A673 (cell line): ENCODE measurements at regions of chr4 and their contacts with region 1.

Region 1: DNA sequence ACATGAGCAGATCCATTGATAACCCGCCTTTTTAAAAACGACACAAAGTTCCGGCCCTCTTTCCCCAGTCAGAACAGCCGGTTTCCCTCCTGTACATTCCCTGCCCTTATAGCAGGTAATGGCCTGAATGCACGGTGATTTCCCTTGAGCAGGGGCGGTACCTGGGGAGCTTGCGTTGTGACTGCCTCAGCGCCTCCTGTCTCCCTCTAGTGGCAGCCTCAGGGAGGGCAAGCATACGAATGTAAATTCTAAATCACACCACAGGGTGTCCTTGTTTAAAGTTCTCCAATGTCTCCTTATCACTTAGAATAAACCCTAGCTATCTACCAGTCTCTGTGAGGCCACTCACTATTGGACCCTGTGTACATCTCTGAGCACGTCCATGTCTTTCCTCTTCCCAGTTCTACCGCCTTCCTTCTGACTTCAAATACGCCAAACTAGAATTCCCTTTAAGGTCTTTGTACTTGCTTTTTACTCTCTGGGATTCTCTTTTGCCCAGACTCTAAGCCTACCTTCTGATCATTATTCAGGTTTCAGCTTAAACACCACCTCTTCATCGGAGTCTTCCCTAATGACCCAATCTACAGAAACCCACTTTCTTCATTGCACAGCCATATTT is 18.4 kb upstream of the LDB2 start:
- DNase-seq: peak; percentile 82
- H3K4me3 ChIP-seq: no peak overlapping the region
- H3K27ac ChIP-seq: no peak overlapping the region
- H3K4me1 ChIP-seq: no peaks in the 10 kb centered on the region
- H3K27me3 ChIP-seq: no peaks in the 10 kb centered on the region
- CTCF ChIP-seq: peak; percentile 97

Region 2: GRCh38 chr4:16794816-16795445 is 121.9 kb before region 1 on chr4:
- CTCF ChIA-PET with region 1: interaction called, 4 read pairs
- POLR2A ChIA-PET with region 1: no interaction called
- intact Hi-C with region 1: loop called (anchors 5 kb)
- DNase-seq: peak; percentile 89
- H3K4me3 ChIP-seq: no peak overlapping the region
- H3K27ac ChIP-seq: no peak overlapping the region
- H3K4me1 ChIP-seq: peaks cover 6% of the 10 kb centered on the region
- H3K27me3 ChIP-seq: no peaks in the 10 kb centered on the region
- CTCF ChIP-seq: peak; percentile 98